Activated B cell treated with CpG ODN at 0.5 μM for 24 hours (primary cell): ENCODE measurements at regions of chr1 and their contacts with region 1.

Region 1: GRCh38 chr1:40352126-40352525 is 21.4 kb upstream of the SMAP2 start:
- DNase-seq: no peak
- ATAC-seq: peak; percentile 94
- H3K4me3 Mint-ChIP-seq: peak overlapping the region; percentile 65
- H3K27ac Mint-ChIP-seq: peak overlapping the region; percentile 81
- H3K4me1 Mint-ChIP-seq: peaks cover 54% of the 10 kb centered on the region
- H3K27me3 Mint-ChIP-seq: no peaks in the 10 kb centered on the region
- CTCF ChIP-seq: no peak

Region 2: DNA sequence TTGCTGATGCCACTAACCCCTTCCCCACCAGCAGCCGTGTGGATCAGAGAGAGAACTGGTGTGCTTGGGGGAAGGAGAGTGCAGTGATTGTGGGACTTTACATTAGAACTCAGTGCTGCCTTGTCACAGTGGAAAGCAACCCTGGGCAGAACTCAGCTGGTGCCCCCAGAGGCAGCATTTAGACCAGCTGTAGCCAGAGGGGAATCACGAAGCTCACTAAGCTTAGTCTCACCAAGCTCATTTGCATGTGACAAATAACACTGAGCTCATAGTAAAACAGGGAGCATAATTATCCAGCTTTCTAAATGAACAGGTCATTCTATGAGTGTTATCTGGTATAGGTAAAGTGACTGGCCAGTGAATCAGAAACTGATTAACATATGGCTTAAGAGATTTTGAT is 11.6 kb after region 1 on chr1:
- CTCF ChIA-PET with region 1: interaction called, 13 read pairs
- POLR2A ChIA-PET with region 1: interaction called, 10 read pairs
- intact Hi-C with region 1: no loop called
- DNase-seq: peak; percentile 45
- ATAC-seq: peak; percentile 100
- H3K4me3 Mint-ChIP-seq: peak overlapping the region; percentile 5
- H3K27ac Mint-ChIP-seq: peak overlapping the region; percentile 74
- H3K4me1 Mint-ChIP-seq: peaks cover 19% of the 10 kb centered on the region
- H3K27me3 Mint-ChIP-seq: no peaks in the 10 kb centered on the region
- CTCF ChIP-seq: no peak

Region 3: DNA sequence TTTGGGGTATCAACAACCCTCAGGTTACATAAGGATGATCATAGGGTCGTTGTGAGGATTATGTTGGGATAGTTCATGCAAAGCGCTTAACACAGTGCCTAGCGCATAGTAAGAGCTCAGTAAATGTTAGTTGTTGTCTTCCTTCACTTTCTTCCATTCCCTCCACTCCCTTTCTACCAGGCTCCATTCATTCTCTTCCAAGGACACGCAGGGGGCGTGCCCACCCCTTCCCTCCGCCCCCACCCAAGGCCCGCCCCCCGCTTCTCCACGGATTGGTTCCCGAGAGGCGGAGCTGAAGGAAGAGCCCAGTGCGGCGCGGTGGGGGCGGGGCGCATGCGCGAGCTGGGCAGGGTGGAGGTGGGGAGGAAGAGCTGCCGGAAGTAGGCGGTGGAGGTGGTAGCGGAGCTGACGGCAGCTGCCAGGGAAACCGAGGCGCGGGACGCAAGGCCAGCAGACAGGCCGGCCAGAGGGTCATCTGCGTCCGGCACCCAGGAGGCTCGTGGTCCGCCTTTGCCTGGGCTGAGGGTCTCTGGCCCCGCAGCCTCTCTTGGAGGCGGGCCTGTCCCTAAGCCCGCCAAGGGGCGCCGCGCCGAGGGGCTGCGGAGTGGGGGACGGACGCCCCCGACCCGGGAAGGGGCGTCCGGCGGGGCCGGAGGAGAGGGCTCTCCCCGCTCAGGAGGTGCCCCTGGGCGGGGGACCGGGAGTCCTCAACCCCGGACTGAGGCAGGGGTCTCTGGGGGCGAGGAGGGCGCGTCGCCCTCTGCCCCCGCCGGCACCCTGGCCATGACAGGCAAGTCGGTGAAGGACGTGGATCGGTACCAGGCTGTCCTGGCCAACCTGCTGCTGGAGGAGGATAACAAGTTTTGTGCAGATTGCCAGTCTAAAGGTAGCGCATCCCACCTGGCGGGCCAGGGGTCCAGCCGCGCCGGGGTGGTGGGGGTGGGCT is 21.5 kb after region 1 on chr1 and contains the start of gene SMAP2:
- CTCF ChIA-PET with region 1: interaction called, 8 read pairs
- POLR2A ChIA-PET with region 1: interaction called, 41 read pairs
- intact Hi-C with region 1: no loop called
- DNase-seq: peak; percentile 91
- ATAC-seq: peak; percentile 88
- H3K4me3 Mint-ChIP-seq: peak within 1 kb of the TSS; percentile 97
- H3K27ac Mint-ChIP-seq: peak within 1 kb of the TSS; percentile 96
- H3K4me1 Mint-ChIP-seq: peaks cover 52% of the 10 kb centered on the region
- H3K27me3 Mint-ChIP-seq: no peaks in the 10 kb centered on the region
- CTCF ChIP-seq: no peak
- total RNA-seq, gene SMAP2: 202 and 220 TPM in 2 replicates